K562 (cell line): ENCODE measurements at regions of chr17 and their contacts with region 1.

Region 1: GRCh38 chr17:13513039-13513405 is 88.7 kb downstream of the HS3ST3A1 start:
- DNase-seq: peak; percentile 16 to 81 (median 26)
- ATAC-seq: peak; percentile 75
- H3K4me3 ChIP-seq: peak overlapping the region; percentile 18; the same call in 1 of the 2 replicates
- H3K27ac ChIP-seq: peak overlapping the region; percentile 89
- H3K4me1 ChIP-seq: peaks cover 8 to 40% of the 10 kb centered on the region in 2 experiments
- H3K27me3 ChIP-seq: no peaks in the 10 kb centered on the region
- CTCF ChIP-seq: peak; percentile 3 to 22 (median 8); a peak in 1 of 6 replicates
- EP300 ChIP-seq: no peak
- POLR2A ChIP-seq: no peak
- RAD21 ChIP-seq: peak; percentile 13 to 52; a peak in 2 of 4 replicates

Region 2: GRCh38 chr17:13337864-13338371 is 175.1 kb before region 1 on chr17:
- CTCF ChIA-PET with region 1: no interaction called
- POLR2A ChIA-PET with region 1: no interaction called
- in situ Hi-C with region 1: no loop called
- intact Hi-C with region 1: loop called (anchors 10 kb)
- DNase-seq: peak; percentile 11 to 65 (median 30)
- ATAC-seq: peak; percentile 72
- H3K4me3 ChIP-seq: peak overlapping the region; percentile 21; the same call in 1 of the 2 replicates
- H3K27ac ChIP-seq: peak overlapping the region; percentile 39; the same call in 1 of the 3 replicates
- H3K4me1 ChIP-seq: peaks cover 0 to 3% of the 10 kb centered on the region in 2 experiments; a peak in 3 of 5 replicates
- H3K27me3 ChIP-seq: no peaks in the 10 kb centered on the region
- CTCF ChIP-seq: peak; percentile 50 to 80 (median 55)
- EP300 ChIP-seq: no peak
- POLR2A ChIP-seq: no peak
- RAD21 ChIP-seq: peak; percentile 75 to 79

Region 3: DNA sequence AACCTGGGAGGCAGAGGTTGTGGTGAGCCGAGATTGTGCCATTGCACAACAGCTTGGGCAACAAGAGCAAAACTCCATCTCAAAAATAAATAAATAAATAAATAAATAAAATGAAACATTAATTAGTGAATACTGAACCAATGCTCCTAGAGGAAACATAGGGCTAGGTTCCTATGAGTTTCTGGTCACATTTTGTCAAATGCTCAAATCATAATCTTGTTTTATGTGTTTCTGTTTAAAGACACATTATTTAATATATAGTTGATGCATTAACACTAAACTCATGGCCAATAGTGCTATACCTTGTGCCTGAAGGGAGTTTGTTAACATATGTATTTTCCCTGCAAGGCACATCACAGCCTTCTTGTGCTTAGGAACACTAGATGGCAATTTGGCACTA is 21.9 kb after region 1 on chr17:
- CTCF ChIA-PET with region 1: no interaction called
- POLR2A ChIA-PET with region 1: interaction called, 3 read pairs
- in situ Hi-C with region 1: no loop called
- intact Hi-C with region 1: loop called (anchors 1 kb)
- DNase-seq: no peak
- ATAC-seq: no peak
- H3K4me3 ChIP-seq: no peak overlapping the region
- H3K27ac ChIP-seq: no peak overlapping the region
- H3K4me1 ChIP-seq: peaks cover 6 to 35% of the 10 kb centered on the region in 2 experiments
- H3K27me3 ChIP-seq: no peaks in the 10 kb centered on the region
- CTCF ChIP-seq: no peak
- EP300 ChIP-seq: no peak
- POLR2A ChIP-seq: no peak
- RAD21 ChIP-seq: no peak

Region 4: GRCh38 chr17:13594762-13595598 is 82.0 kb after region 1 on chr17:
- CTCF ChIA-PET with region 1: no interaction called
- POLR2A ChIA-PET with region 1: no interaction called
- in situ Hi-C with region 1: no loop called
- intact Hi-C with region 1: loop called (anchors 5 kb)
- DNase-seq: peak; percentile 55 to 88 (median 67)
- ATAC-seq: peak; percentile 69
- H3K4me3 ChIP-seq: no peak overlapping the region
- H3K27ac ChIP-seq: peak overlapping the region; percentile 61
- H3K4me1 ChIP-seq: peaks cover 0 to 32% of the 10 kb centered on the region in 2 experiments; a peak in 2 of 5 replicates
- H3K27me3 ChIP-seq: no peaks in the 10 kb centered on the region
- CTCF ChIP-seq: peak; percentile 67 to 72 (median 71)
- EP300 ChIP-seq: 0 out of 2 replicates have a peak, but pooled peaks have one; percentile 34
- POLR2A ChIP-seq: no peak
- RAD21 ChIP-seq: peak; percentile 60 to 64